BJ (cell line): ENCODE measurements at regions of chr18 and their contacts with region 1.

Region 1: GRCh38 chr18:50819728-50820378 is at the start of gene MRO:
- DNase-seq: peak; percentile 10
- H3K4me3 ChIP-seq: peak within 1 kb of the TSS; percentile 25
- H3K27me3 ChIP-seq: no peaks in the 10 kb centered on the region
- CTCF ChIP-seq: peak; percentile 97
- polyA plus RNA-seq, gene MRO: not detected in 2 replicates

Region 2: GRCh38 chr18:50832754-50833153 is 12.9 kb after region 1 on chr18:
- CTCF ChIA-PET with region 1: interaction called, 20 read pairs
- POLR2A ChIA-PET with region 1: no interaction called
- DNase-seq: no peak
- H3K4me3 ChIP-seq: no peak overlapping the region
- H3K27me3 ChIP-seq: 0 out of 2 replicates have a peak, but pooled peaks cover 2% of the 10 kb centered on the region
- CTCF ChIP-seq: no peak

Region 3: GRCh38 chr18:51461956-51462355 is 642.1 kb after region 1 on chr18:
- CTCF ChIA-PET with region 1: no interaction called
- POLR2A ChIA-PET with region 1: no interaction called
- DNase-seq: no peak
- H3K4me3 ChIP-seq: no peak overlapping the region
- H3K27me3 ChIP-seq: no peaks in the 10 kb centered on the region
- CTCF ChIP-seq: no peak